Sigmoid colon (tissue), 7 donors: ENCODE measurements at regions of chr1 and their contacts with region 1.

Region 1: DNA sequence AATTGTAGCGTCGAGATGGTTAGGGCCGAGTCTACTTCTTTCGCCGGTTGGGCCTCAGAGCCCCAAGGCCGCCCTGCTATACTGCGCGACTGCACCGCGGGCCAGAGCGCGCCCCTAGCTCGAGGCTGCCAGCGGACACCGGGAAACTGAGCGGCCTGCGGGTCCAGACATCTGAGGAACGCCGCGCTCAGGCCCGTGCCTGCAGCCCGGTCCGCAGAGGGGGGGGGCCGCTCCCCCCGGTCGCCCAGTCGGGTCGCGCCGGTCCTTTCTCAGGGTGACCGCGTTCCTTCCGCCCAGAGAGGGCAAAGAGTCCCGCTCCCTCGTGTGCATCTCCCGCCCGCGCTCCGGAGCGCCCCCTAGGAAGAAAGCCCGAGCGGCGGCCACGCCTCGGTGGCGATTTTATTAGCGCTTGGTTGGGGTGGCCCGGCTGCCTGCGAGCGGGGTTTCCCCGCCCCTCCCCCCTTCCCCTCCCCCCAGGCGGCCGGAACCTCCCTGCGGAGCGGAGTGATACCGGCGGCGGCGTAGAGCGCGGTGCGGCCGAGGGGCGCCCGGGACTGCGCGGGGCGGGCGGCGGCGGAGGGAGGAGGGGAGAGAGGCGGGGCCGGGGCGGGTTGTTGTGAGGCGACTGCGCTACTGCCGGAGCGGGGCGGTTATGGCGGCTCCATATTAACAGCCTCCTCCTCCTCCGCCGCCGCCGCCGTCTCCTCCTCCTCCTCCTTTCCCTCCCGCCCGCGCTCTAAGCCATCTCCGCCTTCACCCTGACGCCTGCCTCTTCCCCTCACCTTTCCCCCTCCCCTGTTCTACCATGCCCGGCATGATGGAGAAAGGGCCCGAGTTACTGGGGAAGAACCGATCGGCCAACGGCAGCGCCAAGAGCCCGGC is at the start of gene RCOR3:
- DNase-seq: peak; percentile 97
- H3K4me3 ChIP-seq: peak within 1 kb of the TSS; percentile 75 to 99 (median 94)
- H3K27ac ChIP-seq: peak within 1 kb of the TSS; percentile 99 to 100 (median 100)
- H3K4me1 ChIP-seq: peaks cover 0 to 40% (median 32%) of the 10 kb centered on the region in 4 donors
- H3K27me3 ChIP-seq: no peaks in the 10 kb centered on the region
- CTCF ChIP-seq: peak in 1 of 4 experiments; percentile 47
- EP300 ChIP-seq: peak in 1 of 4 donors; percentile 12
- POLR2A ChIP-seq: peak; percentile 77 to 85
- total RNA-seq, gene RCOR3: 40.7 to 60.3 (median 55.7) TPM

Region 2: GRCh38 chr1:211236633-211237320 is 22.2 kb before region 1 on chr1:
- intact Hi-C with region 1: no loop called
- DNase-seq: no peak
- H3K4me3 ChIP-seq: no peak overlapping the region
- H3K27ac ChIP-seq: no peak overlapping the region
- H3K4me1 ChIP-seq: no peaks in the 10 kb centered on the region
- H3K27me3 ChIP-seq: no peaks in the 10 kb centered on the region
- CTCF ChIP-seq: no peak
- EP300 ChIP-seq: no peak
- POLR2A ChIP-seq: no peak

Region 3: DNA sequence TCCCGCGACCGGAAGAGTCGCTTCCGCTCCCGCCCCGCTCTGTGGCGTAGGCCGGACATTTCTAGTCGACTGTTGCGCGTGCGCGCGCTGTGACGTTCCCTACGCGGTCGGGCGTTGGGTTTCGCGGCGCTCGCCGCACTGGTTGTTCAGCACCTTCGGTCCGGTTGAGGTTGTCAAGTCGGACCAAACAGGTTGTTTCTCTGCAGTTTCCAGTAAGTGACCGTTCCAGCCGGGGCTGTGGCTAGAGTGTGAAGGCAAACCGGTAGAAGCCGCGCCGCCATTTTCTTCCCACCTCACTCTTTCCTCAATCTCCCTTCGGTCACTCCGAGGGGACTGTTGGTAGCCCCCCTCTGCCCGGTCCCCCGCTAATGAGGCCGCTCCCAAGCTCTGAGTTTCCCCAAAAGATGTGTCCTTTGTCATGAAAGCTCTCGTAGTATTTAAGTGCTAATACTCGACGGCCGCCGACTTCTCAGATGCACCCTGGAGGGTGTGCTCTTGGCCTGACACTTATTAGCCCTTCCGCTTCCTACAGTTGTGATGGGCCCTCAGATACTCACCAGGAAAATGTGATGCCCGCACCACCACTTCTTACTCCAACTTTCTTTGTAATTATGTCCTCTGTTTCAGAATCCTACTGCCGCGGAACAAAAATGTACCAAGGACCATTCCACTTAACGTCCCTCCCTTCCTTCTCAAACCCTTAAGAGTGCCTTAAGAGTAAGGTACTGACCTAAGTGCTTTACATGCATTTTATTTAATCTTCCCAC is 123.9 kb after region 1 on chr1:
- intact Hi-C with region 1: loop called (anchors 2 kb)
- DNase-seq: peak; percentile 96
- H3K4me3 ChIP-seq: peak overlapping the region; percentile 52 to 73 (median 64)
- H3K27ac ChIP-seq: peak overlapping the region; percentile 83 to 97 (median 90)
- H3K4me1 ChIP-seq: peaks cover 0 to 6% (median 0%) of the 10 kb centered on the region in 4 donors
- H3K27me3 ChIP-seq: no peaks in the 10 kb centered on the region
- CTCF ChIP-seq: no peak
- EP300 ChIP-seq: no peak
- POLR2A ChIP-seq: peak; percentile 82 to 95